Activated CD4-positive, alpha-beta T cell treated with anti-CD3 and anti-CD28 coated beads, Interleukin-2, amount 10 ng/mL, durations not matched to agents 7 days and 5 days (primary cell): ENCODE measurements at regions of chr4 and their contacts with region 1.

Region 1: DNA sequence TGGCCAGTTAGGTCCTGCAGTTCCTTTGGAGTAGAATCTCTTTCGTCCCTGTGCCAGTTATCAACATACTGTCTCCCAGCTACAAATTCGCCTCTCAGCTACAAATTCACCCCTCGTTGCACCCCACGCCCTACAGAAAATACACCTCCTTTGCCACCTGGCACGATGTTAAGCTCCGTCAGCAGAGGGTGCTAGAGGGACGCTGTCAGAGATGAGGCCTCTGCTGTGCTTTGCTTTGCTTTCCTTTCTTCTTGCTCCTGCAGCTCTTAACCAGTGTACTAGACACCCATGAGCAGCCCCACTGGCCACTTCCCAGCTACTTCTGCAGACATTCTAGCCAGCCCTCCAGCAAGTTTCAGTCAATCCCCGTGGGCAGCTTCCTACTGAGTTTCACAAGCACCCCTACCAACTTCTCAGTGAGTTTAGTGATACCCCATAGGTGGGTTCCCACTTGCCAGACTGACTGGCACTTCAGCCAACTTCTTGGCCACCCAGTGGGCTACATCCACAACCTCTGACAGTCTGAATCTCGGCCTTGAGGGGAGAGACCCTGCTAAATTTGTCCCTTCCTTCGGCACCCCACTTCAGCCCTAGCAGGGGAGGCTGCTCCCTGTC is 21.8 kb downstream of the HAUS3 start:
- DNase-seq: peak; percentile 87
- H3K4me3 Mint-ChIP-seq: no peak overlapping the region
- H3K27ac Mint-ChIP-seq: peak overlapping the region; percentile 10
- H3K4me1 Mint-ChIP-seq: peaks cover 10% of the 10 kb centered on the region
- H3K27me3 Mint-ChIP-seq: no peaks in the 10 kb centered on the region

Region 2: GRCh38 chr4:1910643-1911042 is 309.5 kb before region 1 on chr4:
- CTCF ChIA-PET with region 1: no interaction called
- POLR2A ChIA-PET with region 1: no interaction called
- DNase-seq: peak; percentile 38
- H3K4me3 Mint-ChIP-seq: no peak overlapping the region
- H3K27ac Mint-ChIP-seq: peak overlapping the region; percentile 1
- H3K4me1 Mint-ChIP-seq: peaks cover 43% of the 10 kb centered on the region
- H3K27me3 Mint-ChIP-seq: no peaks in the 10 kb centered on the region

Region 3: GRCh38 chr4:2251073-2251794 is 31.1 kb after region 1 on chr4:
- CTCF ChIA-PET with region 1: no interaction called
- POLR2A ChIA-PET with region 1: no interaction called
- DNase-seq: no peak
- H3K4me3 Mint-ChIP-seq: no peak overlapping the region
- H3K27ac Mint-ChIP-seq: no peak overlapping the region
- H3K4me1 Mint-ChIP-seq: no peaks in the 10 kb centered on the region
- H3K27me3 Mint-ChIP-seq: no peaks in the 10 kb centered on the region

Region 4: DNA sequence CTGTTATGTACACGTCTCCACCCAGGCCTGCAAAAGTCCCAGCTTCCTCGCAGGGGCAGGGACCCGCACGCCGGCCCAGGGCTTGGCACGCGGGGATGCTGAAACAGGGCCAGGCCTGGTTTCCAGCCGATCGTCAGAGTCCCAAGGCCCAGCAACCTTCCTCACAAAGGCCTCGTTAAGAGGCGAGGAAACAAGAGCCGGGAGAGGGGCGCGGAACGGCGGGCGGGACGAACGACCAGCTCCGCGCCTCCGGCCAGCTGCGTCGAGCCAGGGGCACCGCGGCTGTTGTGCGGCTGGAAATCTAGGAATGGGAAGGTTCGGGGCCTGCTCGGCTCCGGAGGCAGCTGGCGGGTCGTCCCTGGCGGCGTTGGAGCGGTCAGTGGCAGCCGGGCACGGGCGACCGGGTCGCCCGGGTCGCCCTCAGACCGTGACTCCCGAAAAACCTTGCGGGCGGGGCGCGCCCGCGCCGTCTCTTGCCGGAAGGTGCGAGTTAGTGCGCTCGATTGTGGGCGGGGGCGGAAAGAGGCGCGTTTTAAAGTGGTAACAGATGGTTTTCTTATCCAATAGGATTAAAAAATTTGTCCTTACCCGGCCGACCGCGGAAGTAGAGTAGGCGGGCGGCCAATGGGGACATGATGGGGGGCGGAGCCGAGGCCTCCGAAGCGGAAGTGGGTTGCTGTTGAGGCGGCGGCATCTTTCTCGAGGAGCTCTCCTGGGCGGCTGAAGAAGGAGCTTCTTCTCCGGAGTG is 248.5 kb after region 1 on chr4 and contains the start of gene RNF4:
- CTCF ChIA-PET with region 1: interaction called, 10 read pairs
- POLR2A ChIA-PET with region 1: no interaction called
- DNase-seq: peak; percentile 97
- H3K4me3 Mint-ChIP-seq: peak within 1 kb of the TSS; percentile 98
- H3K27ac Mint-ChIP-seq: peak within 1 kb of the TSS; percentile 99
- H3K4me1 Mint-ChIP-seq: peaks cover 47% of the 10 kb centered on the region
- H3K27me3 Mint-ChIP-seq: no peaks in the 10 kb centered on the region
- total RNA-seq, gene RNF4: 96.2 to 102 TPM